ENCODE measurements at regions of chr2 and their contacts with region 1.

Region 1: DNA sequence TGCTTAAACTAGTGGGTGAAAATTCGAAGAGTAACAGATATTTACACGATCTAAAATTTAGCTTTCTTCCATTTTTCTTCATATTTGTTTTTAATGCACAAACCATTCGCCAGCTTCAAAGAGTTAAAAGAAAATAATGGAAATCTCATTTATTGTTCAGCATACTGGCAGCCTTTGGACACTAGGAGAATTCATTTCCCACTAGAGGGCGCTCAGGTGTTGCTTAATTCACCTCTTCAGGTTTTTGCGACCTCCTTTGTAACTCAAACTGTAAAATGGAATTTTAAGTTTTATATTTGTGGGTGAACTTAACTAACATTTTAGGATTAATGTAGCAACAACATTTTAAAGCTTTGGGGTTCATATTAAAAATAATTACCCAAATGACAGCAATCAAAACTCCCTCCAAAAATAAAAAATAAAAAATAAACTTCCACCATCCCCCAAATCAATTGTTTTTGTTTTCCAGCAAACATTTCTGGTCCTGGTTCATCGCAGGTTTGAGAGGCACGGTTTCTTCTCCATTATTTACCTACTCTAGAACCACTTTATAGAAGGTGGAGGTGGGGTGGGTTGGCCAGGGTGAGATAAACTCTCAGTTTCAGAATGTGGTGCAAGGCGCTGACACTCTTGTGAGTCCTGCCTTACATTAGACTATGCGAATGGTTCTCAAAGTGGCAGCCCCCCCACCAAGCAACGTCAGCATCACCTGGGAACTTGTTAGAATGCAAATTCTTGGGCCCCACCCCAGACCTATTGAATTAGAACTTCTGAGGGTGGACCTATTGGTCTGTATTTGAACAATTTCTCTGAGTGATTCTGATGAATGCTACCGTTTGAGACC is 24.7 kb upstream of the PNPT1 start:
- DNase-seq: no peak
- H3K4me3 ChIP-seq: no peak overlapping the region
- H3K27ac ChIP-seq: no peak overlapping the region
- H3K4me1 ChIP-seq: no peaks in the 10 kb centered on the region
- H3K27me3 ChIP-seq: peaks cover 5% of the 10 kb centered on the region
- CTCF ChIP-seq: peak; percentile 84

Region 2: GRCh38 chr2:56009758-56010458 is 291.5 kb after region 1 on chr2:
- intact Hi-C with region 1: loop called (anchors 10 kb)
- DNase-seq: no peak
- H3K4me3 ChIP-seq: no peak overlapping the region
- H3K27ac ChIP-seq: no peak overlapping the region
- H3K4me1 ChIP-seq: peaks cover 12% of the 10 kb centered on the region
- H3K27me3 ChIP-seq: no peaks in the 10 kb centered on the region
- CTCF ChIP-seq: peak; percentile 66

Region 3: DNA sequence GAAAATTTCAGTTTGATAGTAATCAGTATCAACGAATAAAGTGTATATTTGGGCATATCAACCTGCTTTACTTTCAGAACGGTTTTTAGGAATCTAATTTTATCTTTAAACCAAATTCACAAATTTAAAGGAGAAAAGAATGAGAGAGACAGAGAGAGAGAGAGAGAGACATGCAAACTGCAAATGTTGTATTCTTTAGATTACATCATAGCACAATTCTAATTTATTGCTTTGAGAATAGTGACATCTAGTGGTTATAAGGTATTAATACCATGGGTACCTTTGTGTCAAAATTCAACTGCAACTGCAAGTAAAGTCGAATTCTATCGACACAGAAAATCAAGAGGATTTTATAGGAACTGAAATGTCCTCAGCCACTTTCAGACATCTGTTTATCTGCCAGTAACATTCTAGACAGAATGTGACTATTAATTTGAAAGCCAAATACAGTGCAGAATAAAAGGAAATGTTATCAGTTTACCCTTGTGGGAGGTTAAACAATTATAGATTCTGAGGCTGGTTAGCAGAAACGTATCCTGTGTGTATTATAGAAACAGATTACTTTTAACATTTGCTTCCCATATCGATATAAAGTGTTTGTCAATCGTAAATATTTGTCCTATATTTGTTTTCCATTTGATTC is 1798.4 kb after region 1 on chr2:
- intact Hi-C with region 1: loop called (anchors 5 kb)
- DNase-seq: no peak
- H3K4me3 ChIP-seq: no peak overlapping the region
- H3K27ac ChIP-seq: no peak overlapping the region
- H3K4me1 ChIP-seq: no peaks in the 10 kb centered on the region
- H3K27me3 ChIP-seq: no peaks in the 10 kb centered on the region
- CTCF ChIP-seq: peak; percentile 69

Measured in left ventricle myocardium inferior (tissue), 1 donor.